Adrenal gland (tissue), 19 donors: ENCODE measurements at regions of chr17 and their contacts with region 1.

Region 1: GRCh38 chr17:40355123-40355803 is 9.3 kb downstream of the GJD3 start:
- DNase-seq: peak; percentile 66 to 92 (median 80)
- H3K4me3 ChIP-seq: no peak overlapping the region
- H3K27ac ChIP-seq: peak overlapping the region in 2 of 5 donors; percentile 50 to 64
- H3K4me1 ChIP-seq: peaks cover 7 to 38% of the 10 kb centered on the region in 2 donors
- H3K27me3 ChIP-seq: no peaks in the 10 kb centered on the region
- CTCF ChIP-seq: peak; percentile 82 to 99 (median 96)
- POLR2A ChIP-seq: no peak

Region 2: GRCh38 chr17:40303009-40303657 is 52.1 kb before region 1 on chr17:
- intact Hi-C with region 1: loop called (anchors 2 kb)
- DNase-seq: peak in 3 of 7 donors; percentile 67 to 81 (median 73)
- H3K4me3 ChIP-seq: no peak overlapping the region
- H3K27ac ChIP-seq: peak overlapping the region in 1 of 5 donors; percentile 18
- H3K4me1 ChIP-seq: peaks cover 0 to 24% of the 10 kb centered on the region in 2 donors
- H3K27me3 ChIP-seq: no peaks in the 10 kb centered on the region
- CTCF ChIP-seq: peak; percentile 50 to 94 (median 83)
- POLR2A ChIP-seq: no peak

Region 3: DNA sequence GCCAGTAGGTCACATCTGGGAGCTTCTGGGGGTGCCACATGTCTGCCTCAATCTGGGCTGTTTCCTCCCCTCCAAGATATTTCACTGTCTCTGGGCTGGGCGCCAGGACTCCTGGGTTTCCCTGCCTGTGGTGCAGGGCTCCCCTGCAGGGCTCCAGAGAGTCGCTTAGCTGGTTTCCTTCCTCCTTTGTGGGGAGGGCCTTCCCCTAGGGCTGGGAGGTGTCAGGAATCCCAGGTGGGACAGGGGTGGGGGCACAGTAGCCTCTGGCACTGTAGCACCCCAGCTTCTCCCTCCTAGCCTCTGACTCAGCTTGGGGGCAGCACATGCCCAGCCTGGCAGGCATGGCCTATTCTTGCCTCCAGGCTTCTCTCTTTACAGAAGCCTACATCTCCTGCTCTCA is 43.7 kb before region 1 on chr17:
- intact Hi-C with region 1: loop called (anchors 2 kb)
- DNase-seq: peak in 5 of 7 donors; percentile 68 to 82 (median 74)
- H3K4me3 ChIP-seq: no peak overlapping the region
- H3K27ac ChIP-seq: peak overlapping the region; percentile 2 to 76 (median 65)
- H3K4me1 ChIP-seq: peaks cover 37 to 98% of the 10 kb centered on the region in 2 donors
- H3K27me3 ChIP-seq: no peaks in the 10 kb centered on the region
- CTCF ChIP-seq: peak in 1 of 6 experiments; percentile 14
- POLR2A ChIP-seq: no peak